ENCODE measurements at regions of chr22 and their contacts with region 1.

Region 1: GRCh38 chr22:30005213-30005857 is 74.9 kb upstream of the HORMAD2 start:
- DNase-seq: peak; percentile 90

Region 2: GRCh38 chr22:29128891-29129807 is 876.2 kb before region 1 on chr22:
- intact Hi-C with region 1: no loop called
- DNase-seq: no peak

Region 3: DNA sequence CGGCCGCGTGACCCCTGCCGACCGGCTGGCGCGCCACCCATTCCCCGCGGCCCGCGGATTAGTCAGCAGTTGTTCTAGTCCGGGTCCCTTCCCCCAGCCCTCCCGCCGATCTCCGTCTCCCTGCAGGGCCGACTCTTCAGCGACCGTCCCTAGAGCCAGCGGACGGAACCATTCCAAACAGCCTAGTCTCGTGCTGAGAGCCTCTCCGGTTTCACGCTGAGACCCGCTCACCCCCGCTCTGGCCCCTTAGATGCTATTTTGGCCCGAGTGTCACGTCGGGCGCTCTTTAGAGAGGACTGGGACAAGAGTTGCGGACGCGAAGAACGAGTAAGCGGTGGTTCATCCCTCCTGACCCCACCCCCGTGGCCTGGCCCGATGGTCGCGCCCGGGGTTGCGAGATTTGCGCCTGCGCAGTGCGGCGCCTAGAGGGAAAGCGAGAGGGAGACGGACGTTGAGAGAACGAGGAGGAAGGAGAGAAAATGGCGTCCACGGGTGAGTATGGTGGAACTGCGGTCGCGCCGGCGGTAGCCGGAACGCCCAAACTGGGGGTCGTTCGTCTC is 737.4 kb before region 1 on chr22 and contains the starts of genes EWSR1 and RHBDD3:
- intact Hi-C with region 1: no loop called
- DNase-seq: peak; percentile 99
- total RNA-seq, gene EWSR1: 155 to 168 TPM
- total RNA-seq, gene RHBDD3: 11.8 to 17.6 TPM

Region 4: DNA sequence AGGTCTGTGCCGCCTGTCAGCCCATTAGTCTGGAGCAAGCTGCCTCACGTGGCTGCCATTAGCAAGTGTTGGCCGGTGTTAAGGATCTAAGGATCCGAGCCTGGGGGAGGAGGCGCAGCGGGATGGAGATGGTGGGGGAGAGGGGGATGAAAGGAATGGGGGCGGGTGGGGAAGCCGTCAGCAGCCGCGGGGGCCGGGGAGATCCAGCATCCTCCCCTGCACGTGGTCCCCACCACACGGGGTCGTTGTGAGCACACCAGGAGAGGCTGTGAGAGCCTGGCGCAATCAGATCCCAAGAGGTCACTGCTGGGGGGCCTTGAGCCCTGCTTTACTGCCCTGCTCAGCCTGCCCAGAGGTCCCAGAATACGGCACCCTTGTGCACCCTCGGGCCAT is 278.2 kb before region 1 on chr22:
- intact Hi-C with region 1: loop called in 1 of 2 experiments (anchors 10 kb)
- DNase-seq: no peak

Region 5: DNA sequence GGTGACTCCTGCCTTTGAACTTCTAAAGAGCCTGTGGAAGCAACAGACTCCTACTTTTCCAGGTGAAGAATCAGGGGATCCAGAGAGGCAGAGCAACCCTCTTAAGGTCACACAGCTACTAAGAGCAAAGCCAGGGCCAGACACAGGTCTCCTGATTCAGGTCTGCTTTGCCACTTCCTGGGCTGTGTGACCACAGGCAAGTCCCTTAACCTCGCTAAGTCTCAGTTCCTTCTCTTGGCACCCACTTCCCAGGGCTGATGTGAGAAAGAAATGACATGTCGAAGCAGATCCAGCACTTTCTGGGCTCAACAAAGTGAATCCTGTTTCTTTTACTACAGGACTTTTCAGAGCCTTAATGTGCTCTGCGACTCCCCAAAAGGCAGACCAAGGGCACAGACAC is 208.0 kb before region 1 on chr22:
- intact Hi-C with region 1: no loop called
- DNase-seq: no peak

Region 6: DNA sequence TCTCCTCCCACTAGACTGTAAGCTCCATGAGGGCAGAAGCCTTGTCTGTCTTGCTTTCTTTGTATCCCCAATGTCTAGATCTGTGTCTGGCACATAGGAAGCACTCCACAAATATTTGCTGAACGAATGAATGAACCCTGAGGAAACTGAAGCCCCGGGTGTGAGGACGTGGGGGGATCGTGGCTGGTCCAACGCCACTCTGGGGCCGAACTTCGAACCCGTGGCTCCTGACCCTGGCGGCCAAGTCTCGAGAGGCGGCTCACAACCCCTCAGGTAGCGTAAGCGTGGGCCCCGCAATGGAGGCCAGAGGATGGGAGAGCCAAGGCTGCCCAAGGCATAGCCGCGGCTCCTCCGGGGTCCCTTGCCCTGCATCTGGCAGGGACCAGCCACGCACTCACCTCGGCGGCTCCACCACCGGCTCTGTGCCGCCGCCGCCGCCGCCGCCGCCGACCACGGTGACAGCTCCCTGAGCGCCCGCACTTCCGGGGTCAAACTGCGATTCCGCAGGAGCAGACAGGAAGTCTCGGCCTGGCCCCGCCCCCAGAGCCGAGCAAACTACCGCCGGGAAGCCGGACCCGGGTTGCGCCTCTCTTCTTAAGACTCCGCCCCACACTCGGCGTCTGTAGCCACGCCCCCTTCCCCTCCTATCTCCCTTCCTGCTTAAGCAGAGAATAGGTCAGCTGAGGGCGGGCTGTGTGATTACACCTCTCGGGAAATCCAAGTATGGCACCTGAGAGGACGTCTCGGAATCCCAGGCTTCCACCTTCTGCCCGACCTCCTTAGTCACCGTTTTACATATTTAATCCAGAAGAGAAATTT is 167.3 kb before region 1 on chr22 and contains the start of gene ASCC2:
- intact Hi-C with region 1: loop called in 1 of 2 experiments (anchors 10 kb)
- DNase-seq: peak; percentile 100
- total RNA-seq, gene ASCC2: 31.3 to 37.2 TPM

Region 7: DNA sequence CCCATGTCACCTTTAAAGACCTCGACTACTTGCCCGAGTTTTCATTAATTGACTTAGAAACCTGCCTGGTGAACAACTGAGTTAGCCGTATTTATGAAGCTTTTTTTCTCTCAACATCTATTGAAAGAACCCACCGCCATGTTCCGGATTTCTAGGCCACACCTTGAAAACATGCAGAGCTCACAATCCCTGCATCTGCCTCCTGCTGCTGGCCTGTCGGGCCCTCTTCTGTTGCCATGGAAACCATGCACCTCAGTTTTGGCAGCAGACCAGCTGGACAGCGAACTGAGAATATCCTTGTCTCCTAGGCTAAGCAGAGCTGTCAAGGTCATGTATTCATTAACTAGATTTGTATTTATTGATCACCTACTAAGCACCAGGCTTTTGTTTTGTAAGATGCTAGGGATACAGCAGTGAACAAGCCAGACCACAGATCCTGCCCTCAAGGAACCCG is 1345.1 kb after region 1 on chr22:
- intact Hi-C with region 1: loop called in 1 of 2 experiments (anchors 5 kb)
- DNase-seq: no peak